Sigmoid colon (tissue), 7 donors: ENCODE measurements at regions of chr19 and their contacts with region 1.

Region 1: GRCh38 chr19:1767464-1767933 is 14.2 kb downstream of the ONECUT3 start:
- DNase-seq: no peak
- H3K4me3 ChIP-seq: no peak overlapping the region
- H3K27ac ChIP-seq: no peak overlapping the region
- H3K4me1 ChIP-seq: peaks cover 0 to 5% (median 0%) of the 10 kb centered on the region in 4 donors
- H3K27me3 ChIP-seq: peaks cover 31 to 98% (median 86%) of the 10 kb centered on the region in 3 donors
- CTCF ChIP-seq: peak; percentile 70 to 98 (median 92)
- EP300 ChIP-seq: no peak
- POLR2A ChIP-seq: no peak

Region 2: GRCh38 chr19:1438035-1438932 is 329.2 kb before region 1 on chr19 and contains the start of gene RPS15:
- intact Hi-C with region 1: no loop called
- DNase-seq: peak; percentile 97
- H3K4me3 ChIP-seq: peak within 1 kb of the TSS; percentile 70 to 99 (median 82)
- H3K27ac ChIP-seq: peak within 1 kb of the TSS; percentile 85 to 91 (median 88)
- H3K4me1 ChIP-seq: peaks cover 0 to 31% (median 27%) of the 10 kb centered on the region in 4 donors
- H3K27me3 ChIP-seq: no peaks in the 10 kb centered on the region
- CTCF ChIP-seq: peak; percentile 74 to 95 (median 90)
- EP300 ChIP-seq: no peak
- POLR2A ChIP-seq: peak; percentile 89 to 90
- total RNA-seq, gene RPS15: 3,601 to 5,641 (median 3,840) TPM

Region 3: GRCh38 chr19:1455336-1456120 is 312.0 kb before region 1 on chr19:
- intact Hi-C with region 1: loop called (anchors 10 kb)
- DNase-seq: no peak
- H3K4me3 ChIP-seq: no peak overlapping the region
- H3K27ac ChIP-seq: no peak overlapping the region
- H3K4me1 ChIP-seq: peaks cover 0 to 36% (median 30%) of the 10 kb centered on the region in 4 donors
- H3K27me3 ChIP-seq: peaks cover 64 to 80% (median 75%) of the 10 kb centered on the region in 3 donors
- CTCF ChIP-seq: no peak
- EP300 ChIP-seq: no peak
- POLR2A ChIP-seq: no peak

Region 4: GRCh38 chr19:1551068-1552040 is 216.1 kb before region 1 on chr19:
- intact Hi-C with region 1: loop called (anchors 2 kb)
- DNase-seq: no peak
- H3K4me3 ChIP-seq: no peak overlapping the region
- H3K27ac ChIP-seq: no peak overlapping the region
- H3K4me1 ChIP-seq: peaks cover 0 to 1% (median under 1%) of the 10 kb centered on the region in 4 donors
- H3K27me3 ChIP-seq: no peaks in the 10 kb centered on the region
- CTCF ChIP-seq: no peak
- EP300 ChIP-seq: no peak
- POLR2A ChIP-seq: no peak

Region 5: DNA sequence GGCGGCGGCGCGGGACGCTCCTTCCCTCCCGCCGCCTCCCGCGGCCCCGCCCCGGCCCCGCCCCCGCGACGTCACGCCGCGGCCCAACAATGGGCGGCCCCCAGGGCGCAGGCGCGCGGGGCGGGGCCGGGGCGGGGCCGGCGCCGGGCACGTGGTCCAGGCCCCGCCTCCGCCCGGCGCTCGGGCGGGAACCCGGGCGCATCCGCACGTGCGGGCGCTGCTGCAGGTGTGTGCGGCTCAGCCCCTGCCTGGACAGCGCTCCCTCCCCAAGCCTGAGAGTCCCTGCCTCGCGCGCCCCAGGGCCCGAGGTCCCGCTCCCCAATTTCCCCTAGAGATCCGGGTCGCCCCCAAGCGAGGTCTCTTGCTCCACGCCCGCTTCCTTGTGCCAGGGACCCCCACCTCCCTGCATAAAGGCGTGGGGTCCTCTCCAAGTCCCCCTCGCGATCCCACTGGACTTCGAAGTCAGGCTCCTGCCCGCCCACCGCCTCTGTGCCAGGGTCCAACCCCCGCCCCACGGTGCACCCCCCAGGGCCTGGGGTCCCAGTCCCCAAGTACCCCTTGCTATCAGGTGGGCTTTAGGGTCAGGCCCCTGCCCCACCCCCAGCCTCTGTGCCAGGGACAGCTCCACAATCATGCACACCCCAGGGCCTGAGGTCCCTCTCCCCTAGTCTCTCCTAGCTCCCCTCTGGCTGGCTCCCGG is 199.0 kb before region 1 on chr19 and contains the start of gene MEX3D:
- intact Hi-C with region 1: no loop called
- DNase-seq: peak; percentile 89
- H3K4me3 ChIP-seq: peak within 1 kb of the TSS; percentile 46 to 78 (median 72)
- H3K27ac ChIP-seq: peak within 1 kb of the TSS; percentile 88 to 91 (median 91)
- H3K4me1 ChIP-seq: peaks cover 0 to 27% (median 15%) of the 10 kb centered on the region in 4 donors
- H3K27me3 ChIP-seq: no peaks in the 10 kb centered on the region
- CTCF ChIP-seq: no peak
- EP300 ChIP-seq: no peak
- POLR2A ChIP-seq: no peak
- total RNA-seq, gene MEX3D: 7.4 to 16.1 (median 12.9) TPM

Region 6: DNA sequence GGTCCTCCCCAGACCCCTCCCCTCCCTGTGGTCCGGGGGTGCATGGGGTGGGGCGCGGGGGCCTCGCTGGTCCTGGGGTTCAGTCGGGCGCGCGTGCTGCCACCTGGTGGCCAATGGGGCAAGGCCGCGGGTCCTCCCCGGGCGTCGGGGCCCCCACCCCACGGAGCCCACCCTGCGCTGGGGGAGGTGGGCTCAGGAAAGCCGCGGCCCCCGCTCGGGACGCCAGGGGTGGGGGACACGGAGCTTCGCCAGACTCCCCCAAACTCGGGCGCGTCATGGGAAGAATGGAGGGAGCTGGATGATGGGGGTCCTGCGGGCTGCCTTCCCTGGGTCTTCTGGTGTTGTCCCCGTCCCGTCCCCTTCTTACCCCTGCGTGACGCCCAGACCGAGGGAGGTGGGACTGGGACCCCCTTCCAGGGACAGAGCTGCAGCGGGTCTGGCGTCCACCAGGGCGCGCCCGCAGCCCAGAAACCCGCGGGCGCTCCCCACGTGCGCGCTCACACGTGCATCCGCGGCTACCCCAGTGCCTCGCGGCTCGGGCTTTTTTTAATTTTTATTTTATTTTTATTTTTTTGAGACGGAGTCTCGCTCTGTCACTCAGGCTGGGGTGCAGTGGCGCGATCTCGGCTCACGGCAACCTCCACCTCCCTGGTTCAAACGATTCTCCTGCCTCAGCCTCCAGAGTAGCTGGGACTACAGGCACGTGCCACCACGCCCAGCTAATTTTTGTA is 95.3 kb before region 1 on chr19:
- intact Hi-C with region 1: loop called (anchors 5 kb)
- DNase-seq: no peak
- H3K4me3 ChIP-seq: peak overlapping the region in 2 of 4 donors; percentile 23 to 24
- H3K27ac ChIP-seq: no peak overlapping the region
- H3K4me1 ChIP-seq: peaks cover 0 to 36% (median 29%) of the 10 kb centered on the region in 4 donors
- H3K27me3 ChIP-seq: peaks cover 44 to 97% (median 93%) of the 10 kb centered on the region in 3 donors
- CTCF ChIP-seq: peak; percentile 45 to 91 (median 72)
- EP300 ChIP-seq: no peak
- POLR2A ChIP-seq: no peak

Region 7: DNA sequence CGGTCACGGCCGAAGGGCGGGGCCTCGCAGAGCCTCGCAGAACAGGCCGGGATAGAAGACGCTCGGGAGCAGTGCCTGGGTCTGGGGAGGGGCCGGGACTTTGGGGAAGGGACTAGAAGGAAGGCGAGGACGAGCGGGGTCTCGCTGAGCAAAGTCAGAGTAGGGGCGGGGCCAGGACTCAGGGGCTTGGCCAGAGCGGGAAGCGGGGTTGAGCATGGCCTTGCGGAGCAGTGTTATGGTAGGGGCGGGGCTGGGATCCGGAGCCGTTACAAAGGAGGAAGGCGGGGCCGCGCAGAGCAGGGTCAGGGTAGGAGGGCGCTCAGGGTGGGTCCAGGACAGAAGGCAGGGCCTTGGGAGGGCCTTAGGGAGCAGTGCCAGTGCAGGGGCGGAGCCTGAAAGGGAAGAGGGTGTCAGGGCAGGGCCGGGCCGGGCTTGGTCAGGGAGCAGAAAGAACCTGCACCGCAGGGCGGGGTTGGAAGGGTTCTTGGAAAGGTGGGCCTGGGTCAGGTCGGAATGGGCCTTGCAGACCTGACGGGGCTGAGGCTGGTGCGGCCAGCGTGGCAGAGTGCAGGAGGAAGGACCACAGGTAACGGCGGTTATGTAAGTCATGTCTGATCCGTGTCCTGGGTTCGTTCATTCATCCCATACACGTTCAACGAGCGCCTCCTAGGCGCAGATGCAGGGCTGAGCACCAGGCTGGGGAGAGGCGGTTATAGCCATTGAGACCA is 45.1 kb after region 1 on chr19:
- intact Hi-C with region 1: no loop called
- DNase-seq: peak; percentile 96
- H3K4me3 ChIP-seq: peak overlapping the region; percentile 39 to 57 (median 50)
- H3K27ac ChIP-seq: peak overlapping the region; percentile 70 to 81 (median 72)
- H3K4me1 ChIP-seq: peaks cover 0 to 21% (median 17%) of the 10 kb centered on the region in 4 donors
- H3K27me3 ChIP-seq: no peaks in the 10 kb centered on the region
- CTCF ChIP-seq: peak; percentile 9 to 47 (median 34)
- EP300 ChIP-seq: no peak
- POLR2A ChIP-seq: peak in 1 of 2 donors; percentile 23

Region 8: GRCh38 chr19:1825909-1826556 is 58.5 kb after region 1 on chr19:
- intact Hi-C with region 1: loop called (anchors 2 kb)
- DNase-seq: peak; percentile 88
- H3K4me3 ChIP-seq: no peak overlapping the region
- H3K27ac ChIP-seq: no peak overlapping the region
- H3K4me1 ChIP-seq: peaks cover 0 to 29% (median 20%) of the 10 kb centered on the region in 4 donors
- H3K27me3 ChIP-seq: no peaks in the 10 kb centered on the region
- CTCF ChIP-seq: peak; percentile 84 to 94 (median 88)
- EP300 ChIP-seq: no peak
- POLR2A ChIP-seq: no peak